ENCODE measurements at regions of chr2 and their contacts with region 1.

Region 1: DNA sequence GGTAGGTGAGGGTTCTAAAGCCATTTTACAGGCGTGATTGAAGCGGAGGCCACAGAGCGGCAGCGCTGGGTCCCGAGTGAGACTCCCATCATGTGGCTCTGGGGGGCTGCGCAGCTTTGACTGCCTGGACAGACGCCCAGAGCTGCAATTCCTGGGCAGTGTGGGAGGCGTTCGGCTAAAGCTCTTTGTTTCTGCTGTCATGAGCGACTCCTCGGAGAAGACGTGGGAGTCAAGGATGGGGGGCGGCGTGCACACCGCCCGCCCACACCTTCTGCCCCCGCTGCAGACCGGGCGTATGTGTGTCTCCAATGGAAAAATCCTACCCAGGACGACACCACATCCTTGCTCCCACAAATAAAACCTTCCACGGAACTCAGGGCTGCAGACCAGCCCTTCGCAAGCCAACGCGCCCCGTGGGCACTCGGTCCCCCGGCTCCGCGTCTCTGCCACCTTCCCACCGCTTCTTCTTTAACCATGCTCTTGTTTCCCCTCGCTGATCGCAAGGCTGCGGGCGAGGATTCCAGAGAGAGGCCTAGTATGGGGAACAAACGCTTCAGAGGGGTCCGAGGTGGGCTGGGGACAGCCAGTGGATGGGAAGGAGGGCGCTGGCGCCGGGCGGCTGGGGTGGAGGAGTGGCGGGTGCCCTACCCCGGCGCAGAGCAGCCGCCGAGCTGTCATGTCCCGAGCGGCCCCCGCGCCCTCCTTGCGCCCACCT is 680 bp upstream of the LBH start:
- DNase-seq: no peak
- H3K4me3 Mint-ChIP-seq: peak overlapping the region; percentile 79
- H3K27ac Mint-ChIP-seq: peak overlapping the region; percentile 71
- H3K4me1 Mint-ChIP-seq: peaks cover 55% of the 10 kb centered on the region
- H3K27me3 Mint-ChIP-seq: peaks cover 13% of the 10 kb centered on the region

Region 2: GRCh38 chr2:30245364-30245763 is 14.7 kb after region 1 on chr2:
- CTCF ChIA-PET with region 1: interaction called, 24 read pairs
- POLR2A ChIA-PET with region 1: no interaction called
- DNase-seq: no peak
- H3K4me3 Mint-ChIP-seq: no peak overlapping the region
- H3K27ac Mint-ChIP-seq: no peak overlapping the region
- H3K4me1 Mint-ChIP-seq: peaks cover 57% of the 10 kb centered on the region
- H3K27me3 Mint-ChIP-seq: no peaks in the 10 kb centered on the region